Panc1 (cell line): ENCODE measurements at regions of chr16 and their contacts with region 1.

Region 1: DNA sequence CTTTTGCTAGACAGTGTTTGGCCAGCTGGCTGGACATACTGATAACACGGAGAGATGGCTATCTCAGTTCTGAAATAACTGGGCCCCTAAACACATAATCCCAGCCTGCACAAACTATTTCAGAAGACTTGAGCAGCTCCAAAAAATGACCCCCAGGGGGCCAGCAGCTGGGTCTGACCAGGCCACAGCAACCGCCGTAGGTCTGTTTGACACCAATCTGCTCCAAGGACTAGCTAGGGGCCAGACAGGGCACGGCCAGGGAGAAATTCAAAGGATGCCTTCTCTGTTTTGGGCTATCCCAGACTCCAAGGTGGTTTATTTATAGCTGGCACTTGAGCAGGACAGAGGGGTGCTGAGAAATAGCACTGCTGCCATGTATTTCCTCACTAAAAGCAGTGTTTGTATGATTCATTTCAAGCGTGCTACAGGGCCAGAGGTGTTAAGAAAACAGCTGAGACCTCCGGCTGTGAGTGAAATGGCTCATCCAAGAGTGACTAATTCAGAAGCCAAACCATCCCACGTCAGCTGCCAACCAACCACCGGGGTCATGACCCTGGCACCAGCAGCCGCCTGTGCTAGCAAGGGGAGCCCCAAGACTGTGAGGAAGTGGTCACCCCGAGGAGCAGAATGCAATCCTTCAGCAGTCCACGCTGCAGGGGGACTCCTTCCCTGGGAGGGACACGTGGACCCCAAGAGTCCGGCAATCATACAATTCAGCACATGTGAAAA is 5.7 kb downstream of the GGA2 start:
- DNase-seq: peak; percentile 91
- ATAC-seq: peak; percentile 87
- H3K4me3 ChIP-seq: peak overlapping the region in 1 of 2 experiments; percentile 38; a peak in 2 of 4 replicates
- H3K27ac ChIP-seq: peak overlapping the region; percentile 83
- H3K4me1 ChIP-seq: peaks cover 52% of the 10 kb centered on the region
- H3K27me3 ChIP-seq: no peaks in the 10 kb centered on the region
- CTCF ChIP-seq: no peak

Region 2: DNA sequence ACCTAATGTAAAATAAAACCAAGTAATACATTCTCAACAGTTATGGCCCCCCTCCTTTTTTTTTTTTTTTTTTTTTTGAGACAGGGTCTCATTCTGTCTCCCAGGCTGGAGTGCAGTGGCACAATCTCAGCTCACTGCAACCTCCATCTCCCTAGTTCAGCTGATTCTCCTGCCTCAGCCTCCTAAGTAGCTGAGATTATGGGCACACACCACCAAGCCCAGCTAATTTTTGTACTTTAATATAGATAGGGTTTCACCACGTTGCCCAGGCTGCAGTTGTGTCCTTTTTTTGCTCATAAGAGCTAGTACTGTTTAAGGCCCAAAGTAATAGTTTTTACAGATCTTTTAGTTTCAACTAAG is 34.3 kb after region 1 on chr16:
- CTCF ChIA-PET with region 1: no interaction called
- POLR2A ChIA-PET with region 1: interaction called, 12 read pairs
- in situ Hi-C with region 1: no loop called
- intact Hi-C with region 1: no loop called
- DNase-seq: no peak
- ATAC-seq: no peak
- H3K4me3 ChIP-seq: no peak overlapping the region
- H3K27ac ChIP-seq: no peak overlapping the region
- H3K4me1 ChIP-seq: no peaks in the 10 kb centered on the region
- H3K27me3 ChIP-seq: no peaks in the 10 kb centered on the region
- CTCF ChIP-seq: no peak